Activated naive CD4-positive, alpha-beta T cell treated with anti-CD3 and anti-CD28 coated beads for 36 hours (primary cell): ENCODE measurements at regions of chr9 and their contacts with region 1.

Region 1: GRCh38 chr9:114919611-114920010 is 10.8 kb downstream of the TNFSF8 start:
- DNase-seq: peak; percentile 68
- H3K4me3 Mint-ChIP-seq: peak overlapping the region; percentile 11
- H3K27ac Mint-ChIP-seq: peak overlapping the region; percentile 74
- H3K4me1 Mint-ChIP-seq: peaks cover 88% of the 10 kb centered on the region
- H3K27me3 Mint-ChIP-seq: no peaks in the 10 kb centered on the region

Region 2: GRCh38 chr9:114906908-114907571 is 12.6 kb before region 1 on chr9:
- CTCF ChIA-PET with region 1: interaction called, 22 read pairs
- intact Hi-C with region 1: loop called (anchors 2 kb)
- DNase-seq: peak; percentile 46
- H3K4me3 Mint-ChIP-seq: no peak overlapping the region
- H3K27ac Mint-ChIP-seq: peak overlapping the region; percentile 98
- H3K4me1 Mint-ChIP-seq: peaks cover 54% of the 10 kb centered on the region
- H3K27me3 Mint-ChIP-seq: no peaks in the 10 kb centered on the region

Region 3: GRCh38 chr9:114953917-114954316 is 34.3 kb after region 1 on chr9:
- CTCF ChIA-PET with region 1: no interaction called
- intact Hi-C with region 1: loop called (anchors 5 kb)
- DNase-seq: peak; percentile 62
- H3K4me3 Mint-ChIP-seq: no peak overlapping the region
- H3K27ac Mint-ChIP-seq: peak overlapping the region; percentile 8
- H3K4me1 Mint-ChIP-seq: peaks cover 33% of the 10 kb centered on the region
- H3K27me3 Mint-ChIP-seq: no peaks in the 10 kb centered on the region

Region 4: DNA sequence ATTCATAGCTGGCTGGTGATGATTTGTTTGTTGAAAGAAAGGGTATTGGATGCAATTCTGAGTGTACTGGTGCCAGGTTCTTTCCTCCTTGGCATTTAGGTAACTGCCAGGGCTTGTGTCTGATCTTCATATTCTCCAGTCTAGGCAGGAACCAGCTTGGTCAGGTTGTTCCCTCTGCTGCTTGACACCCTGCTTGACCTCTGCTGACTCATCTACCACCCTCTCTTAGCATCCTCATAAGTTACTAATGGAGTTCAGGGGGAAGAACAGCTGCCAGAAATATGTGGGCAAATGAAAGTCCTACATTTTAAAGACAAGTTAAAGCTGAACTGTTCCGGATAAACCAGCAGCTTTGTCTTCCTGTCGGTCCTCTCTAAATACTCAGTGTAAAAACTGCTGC is 314.5 kb after region 1 on chr9:
- CTCF ChIA-PET with region 1: no interaction called
- intact Hi-C with region 1: no loop called
- DNase-seq: no peak
- H3K4me3 Mint-ChIP-seq: no peak overlapping the region
- H3K27ac Mint-ChIP-seq: no peak overlapping the region
- H3K4me1 Mint-ChIP-seq: no peaks in the 10 kb centered on the region
- H3K27me3 Mint-ChIP-seq: peaks cover 10% of the 10 kb centered on the region